Common myeloid progenitor, CD34-positive (primary cell): ENCODE measurements at regions of chr1 and their contacts with region 1.

Region 1: DNA sequence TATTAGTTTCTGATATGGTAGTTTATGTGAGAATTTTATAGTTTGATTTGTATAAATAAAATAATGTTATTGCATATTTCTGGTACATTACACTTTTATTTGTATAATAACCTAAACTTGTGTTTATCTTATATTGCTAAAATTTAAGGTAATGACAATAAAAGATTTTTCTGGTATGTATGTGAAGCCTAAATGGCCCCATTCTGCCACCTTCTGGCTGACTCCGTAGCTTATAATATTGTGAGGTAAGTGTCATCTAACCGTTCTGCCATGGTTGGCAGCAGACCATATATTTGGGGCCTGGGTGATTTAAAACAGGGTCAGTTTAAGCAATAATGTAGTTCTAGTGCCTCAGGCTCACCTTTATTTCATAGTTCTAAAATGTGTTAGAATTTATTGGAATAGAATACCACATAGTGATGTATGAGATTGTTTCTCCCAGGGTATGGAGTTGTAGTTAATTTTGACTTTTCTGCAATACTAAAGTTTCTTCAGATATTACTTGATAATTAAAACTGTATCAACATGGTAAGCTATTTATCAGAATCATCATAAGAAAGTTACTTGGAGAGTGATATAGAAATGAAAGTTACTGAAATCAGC is 21.2 kb upstream of the PRKACB start:
- DNase-seq: peak; percentile 67 to 81 (median 72)
- H3K4me3 ChIP-seq: no peak overlapping the region
- H3K27ac ChIP-seq: no peak overlapping the region
- H3K4me1 ChIP-seq: no peaks in the 10 kb centered on the region
- H3K27me3 ChIP-seq: no peaks in the 10 kb centered on the region

Region 2: GRCh38 chr1:83900524-83900923 is 222.4 kb before region 1 on chr1:
- CTCF ChIA-PET with region 1: interaction called, 12 read pairs
- POLR2A ChIA-PET with region 1: no interaction called
- DNase-seq: peak in 2 of 3 donors; percentile 10 to 26
- H3K4me3 ChIP-seq: no peak overlapping the region
- H3K27ac ChIP-seq: no peak overlapping the region
- H3K4me1 ChIP-seq: no peaks in the 10 kb centered on the region
- H3K27me3 ChIP-seq: no peaks in the 10 kb centered on the region

Region 3: DNA sequence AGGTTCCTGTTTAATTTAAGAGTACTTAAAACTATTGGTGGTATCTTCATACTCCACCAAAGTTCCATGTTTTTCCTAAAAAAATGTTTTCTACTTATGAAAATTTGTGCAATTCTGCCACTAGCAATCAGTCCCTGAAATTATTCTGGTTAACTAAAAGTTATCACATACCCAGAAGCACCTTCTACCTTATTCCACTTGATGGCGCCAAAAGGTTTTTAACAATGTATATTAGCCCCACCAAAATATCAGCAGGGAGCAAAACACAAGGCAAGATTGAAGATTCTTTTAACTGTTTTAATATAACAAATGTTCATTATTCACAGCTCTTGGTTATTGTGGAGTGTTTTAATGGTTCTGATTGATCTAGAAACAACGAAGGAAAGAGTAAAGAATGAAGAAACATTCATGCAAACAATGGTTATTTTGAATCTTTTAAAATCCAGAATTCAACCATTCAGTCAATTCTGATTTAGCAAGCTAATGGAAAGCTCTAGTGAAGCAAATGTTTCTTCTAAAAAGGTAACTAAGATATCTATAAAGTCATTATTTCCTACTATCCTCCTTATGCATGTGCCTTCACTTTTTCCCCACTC is 191.1 kb before region 1 on chr1:
- CTCF ChIA-PET with region 1: interaction called, 113 read pairs
- POLR2A ChIA-PET with region 1: interaction called, 3 read pairs
- DNase-seq: peak; percentile 58 to 80 (median 72)
- H3K4me3 ChIP-seq: no peak overlapping the region
- H3K27ac ChIP-seq: no peak overlapping the region
- H3K4me1 ChIP-seq: peaks cover 0 to 5% (median 3%) of the 10 kb centered on the region in 4 experiments
- H3K27me3 ChIP-seq: no peaks in the 10 kb centered on the region

Region 4: GRCh38 chr1:84156210-84156621 is 33.3 kb after region 1 on chr1:
- CTCF ChIA-PET with region 1: no interaction called
- POLR2A ChIA-PET with region 1: no interaction called
- DNase-seq: peak; percentile 56 to 92 (median 87)
- H3K4me3 ChIP-seq: peak overlapping the region in 1 of 7 experiments; percentile 31
- H3K27ac ChIP-seq: peak overlapping the region in 1 of 2 experiments; percentile 51
- H3K4me1 ChIP-seq: peaks cover 6 to 35% (median 16%) of the 10 kb centered on the region in 4 experiments
- H3K27me3 ChIP-seq: no peaks in the 10 kb centered on the region